GM10248 (cell line): ENCODE measurements at regions of chr14 and their contacts with region 1.

Region 1: GRCh38 chr14:105369653-105370040 is 28.7 kb upstream of the TEX22 start:
- DNase-seq: no peak
- CTCF ChIP-seq: no peak

Region 2: GRCh38 chr14:105389976-105390848 is 20.6 kb after region 1 on chr14:
- CTCF ChIA-PET with region 1: interaction called, 24 read pairs
- POLR2A ChIA-PET with region 1: no interaction called
- DNase-seq: no peak
- CTCF ChIP-seq: no peak

Region 3: GRCh38 chr14:105398044-105398725 is 28.5 kb after region 1 on chr14 and contains the start of gene TEX22:
- CTCF ChIA-PET with region 1: interaction called, 13 read pairs
- POLR2A ChIA-PET with region 1: no interaction called
- DNase-seq: peak; percentile 96
- CTCF ChIP-seq: peak; percentile 23